Natural killer cell (primary cell): ENCODE measurements at regions of chr3 and their contacts with region 1.

Region 1: GRCh38 chr3:100400780-100401673 is at the starts of genes LNP1 and TOMM70:
- DNase-seq: peak; percentile 89 to 96
- ATAC-seq: peak; percentile 85 to 96 (median 90)
- H3K4me3 ChIP-seq: peak within 1 kb of the TSS; percentile 81
- H3K4me3 Mint-ChIP-seq: peak within 1 kb of the TSS; percentile 93
- H3K27ac ChIP-seq: peak within 1 kb of the TSS; percentile 67
- H3K27ac Mint-ChIP-seq: peak within 1 kb of the TSS; percentile 95
- H3K4me1 ChIP-seq: peaks cover 18% of the 10 kb centered on the region
- H3K4me1 Mint-ChIP-seq: peaks cover 20 to 35% of the 10 kb centered on the region in 2 donors
- H3K27me3 ChIP-seq: no peaks in the 10 kb centered on the region
- H3K27me3 Mint-ChIP-seq: no peaks in the 10 kb centered on the region
- CTCF ChIP-seq: no peak
- total RNA-seq, gene LNP1: 0.39 to 0.85 (median 0.73) TPM
- total RNA-seq, gene TOMM70: 19.1 to 26.6 (median 24.0) TPM

Region 2: DNA sequence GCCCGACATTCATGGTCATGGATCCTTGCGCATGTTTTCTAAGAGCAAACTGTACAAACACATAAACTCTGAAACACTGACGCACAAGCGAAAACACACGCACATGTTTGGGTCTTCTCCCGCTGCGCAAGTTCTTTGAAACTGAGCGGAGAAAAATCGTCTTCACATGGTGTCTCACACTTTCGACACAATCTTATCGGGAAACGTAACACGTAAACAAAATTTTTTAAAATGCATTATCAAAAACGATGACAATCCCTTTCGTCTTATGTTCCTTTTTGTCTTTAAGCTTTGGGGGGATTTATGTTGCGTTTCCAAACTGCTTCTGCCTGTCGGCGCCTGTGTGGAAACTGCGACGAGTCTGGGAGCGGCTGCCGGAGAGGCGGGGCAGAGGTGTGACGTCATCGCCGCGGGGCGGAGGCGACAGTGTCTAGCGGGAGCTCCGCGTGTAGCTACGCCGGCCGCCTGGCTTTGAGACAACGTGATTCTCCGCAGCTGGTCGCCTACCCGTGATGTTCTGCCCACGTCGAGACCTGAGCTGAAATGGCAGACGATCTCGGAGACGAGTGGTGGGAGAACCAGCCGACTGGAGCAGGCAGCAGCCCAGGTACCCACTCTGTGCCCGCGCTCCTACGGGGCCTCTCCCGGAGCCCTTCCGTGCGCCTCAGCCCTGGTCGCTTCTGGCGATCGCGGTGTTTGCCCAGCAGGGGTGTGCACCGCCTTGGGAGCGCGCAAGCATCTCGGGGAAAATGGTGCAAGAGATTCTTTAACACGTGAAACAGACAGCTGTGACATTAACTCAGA is 583.4 kb before region 1 on chr3 and contains the start of gene CMSS1:
- intact Hi-C with region 1: loop called (anchors 10 kb)
- DNase-seq: peak; percentile 96 to 97
- ATAC-seq: peak; percentile 94 to 96 (median 94)
- H3K4me3 ChIP-seq: peak within 1 kb of the TSS; percentile 58
- H3K4me3 Mint-ChIP-seq: peak within 1 kb of the TSS; percentile 98
- H3K27ac ChIP-seq: peak within 1 kb of the TSS; percentile 82
- H3K27ac Mint-ChIP-seq: peak within 1 kb of the TSS; percentile 99
- H3K4me1 ChIP-seq: peaks cover 5% of the 10 kb centered on the region
- H3K4me1 Mint-ChIP-seq: peaks cover 25 to 27% of the 10 kb centered on the region in 2 donors
- H3K27me3 ChIP-seq: no peaks in the 10 kb centered on the region
- H3K27me3 Mint-ChIP-seq: peaks cover 0 to 6% of the 10 kb centered on the region in 2 donors
- CTCF ChIP-seq: no peak
- total RNA-seq, gene CMSS1: 7.8 to 12.7 (median 9.2) TPM

Region 3: GRCh38 chr3:100260685-100261484 is 140.1 kb before region 1 on chr3 and contains the start of gene TBC1D23:
- intact Hi-C with region 1: loop called (anchors 1 kb)
- DNase-seq: peak; percentile 94 to 99
- ATAC-seq: peak; percentile 98 to 100 (median 99)
- H3K4me3 ChIP-seq: peak within 1 kb of the TSS; percentile 80
- H3K4me3 Mint-ChIP-seq: peak within 1 kb of the TSS; percentile 94
- H3K27ac ChIP-seq: peak within 1 kb of the TSS; percentile 93
- H3K27ac Mint-ChIP-seq: peak within 1 kb of the TSS; percentile 95 to 96
- H3K4me1 ChIP-seq: peaks cover 18% of the 10 kb centered on the region
- H3K4me1 Mint-ChIP-seq: peaks cover 39 to 48% of the 10 kb centered on the region in 2 donors
- H3K27me3 ChIP-seq: no peaks in the 10 kb centered on the region
- H3K27me3 Mint-ChIP-seq: no peaks in the 10 kb centered on the region
- CTCF ChIP-seq: no peak
- total RNA-seq, gene TBC1D23: 38.8 to 50.3 (median 45.4) TPM

Region 4: GRCh38 chr3:100316641-100317069 is 84.4 kb before region 1 on chr3:
- intact Hi-C with region 1: loop called (anchors 1 kb)
- DNase-seq: peak in 1 of 2 donors; percentile 77
- ATAC-seq: peak; percentile 79 to 92 (median 92)
- H3K4me3 ChIP-seq: no peak overlapping the region
- H3K4me3 Mint-ChIP-seq: no peak overlapping the region
- H3K27ac ChIP-seq: no peak overlapping the region
- H3K27ac Mint-ChIP-seq: peak overlapping the region; percentile 69 to 79
- H3K4me1 ChIP-seq: peaks cover 4% of the 10 kb centered on the region
- H3K4me1 Mint-ChIP-seq: peaks cover 11 to 13% of the 10 kb centered on the region in 2 donors
- H3K27me3 ChIP-seq: no peaks in the 10 kb centered on the region
- H3K27me3 Mint-ChIP-seq: no peaks in the 10 kb centered on the region
- CTCF ChIP-seq: peak; percentile 77

Region 5: DNA sequence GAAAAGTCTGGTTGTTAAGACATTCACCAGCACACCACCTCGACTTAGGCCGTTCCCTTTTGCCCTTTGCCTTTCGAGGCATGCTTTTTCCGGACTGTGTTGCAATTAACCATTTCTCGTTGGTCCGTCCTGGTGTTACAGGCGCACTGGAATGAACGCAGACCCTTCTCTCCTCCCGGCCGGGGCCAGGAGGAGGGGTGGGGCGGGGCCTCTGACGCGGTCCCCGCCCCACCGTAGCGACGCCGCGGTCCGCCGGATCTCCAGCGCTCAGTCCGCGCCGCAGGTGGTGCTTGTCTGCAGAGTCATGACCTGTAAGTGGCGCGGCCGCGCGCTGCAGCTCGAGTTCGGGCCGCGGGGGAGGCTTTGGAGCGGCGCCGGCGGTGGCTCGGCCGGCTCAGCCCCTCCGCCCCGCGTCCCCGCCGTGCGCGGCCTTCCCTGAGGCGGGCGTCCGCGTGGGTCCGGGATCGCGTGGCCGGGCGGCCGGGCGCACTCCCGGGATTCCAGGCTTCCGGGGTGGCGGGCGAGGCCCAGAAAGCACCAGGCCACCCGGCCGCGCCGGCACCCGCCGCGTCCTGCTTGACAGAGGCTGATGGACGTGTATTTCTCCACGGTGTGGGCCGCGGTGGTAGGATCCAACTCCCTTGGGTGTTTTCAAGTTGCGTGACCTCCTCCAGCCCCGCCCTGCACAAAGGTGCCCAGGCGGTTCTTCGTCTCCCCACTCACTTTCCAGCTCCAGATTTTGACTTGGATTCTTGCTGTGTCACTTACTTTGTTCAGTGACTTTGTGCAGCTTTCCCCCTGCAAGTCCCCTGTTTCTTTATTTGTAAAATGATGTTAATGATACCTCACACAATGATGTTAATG is 66.3 kb before region 1 on chr3 and contains the start of gene NIT2:
- intact Hi-C with region 1: loop called (anchors 1 kb)
- DNase-seq: peak; percentile 69 to 87
- ATAC-seq: peak; percentile 95 to 96 (median 95)
- H3K4me3 ChIP-seq: peak within 1 kb of the TSS; percentile 70
- H3K4me3 Mint-ChIP-seq: peak within 1 kb of the TSS; percentile 95
- H3K27ac ChIP-seq: peak within 1 kb of the TSS; percentile 62
- H3K27ac Mint-ChIP-seq: peak within 1 kb of the TSS; percentile 86 to 88
- H3K4me1 ChIP-seq: peaks cover 21% of the 10 kb centered on the region
- H3K4me1 Mint-ChIP-seq: peaks cover 8 to 29% of the 10 kb centered on the region in 2 donors
- H3K27me3 ChIP-seq: no peaks in the 10 kb centered on the region
- H3K27me3 Mint-ChIP-seq: no peaks in the 10 kb centered on the region
- CTCF ChIP-seq: no peak
- total RNA-seq, gene NIT2: 21.5 to 25.1 (median 24.1) TPM

Region 6: DNA sequence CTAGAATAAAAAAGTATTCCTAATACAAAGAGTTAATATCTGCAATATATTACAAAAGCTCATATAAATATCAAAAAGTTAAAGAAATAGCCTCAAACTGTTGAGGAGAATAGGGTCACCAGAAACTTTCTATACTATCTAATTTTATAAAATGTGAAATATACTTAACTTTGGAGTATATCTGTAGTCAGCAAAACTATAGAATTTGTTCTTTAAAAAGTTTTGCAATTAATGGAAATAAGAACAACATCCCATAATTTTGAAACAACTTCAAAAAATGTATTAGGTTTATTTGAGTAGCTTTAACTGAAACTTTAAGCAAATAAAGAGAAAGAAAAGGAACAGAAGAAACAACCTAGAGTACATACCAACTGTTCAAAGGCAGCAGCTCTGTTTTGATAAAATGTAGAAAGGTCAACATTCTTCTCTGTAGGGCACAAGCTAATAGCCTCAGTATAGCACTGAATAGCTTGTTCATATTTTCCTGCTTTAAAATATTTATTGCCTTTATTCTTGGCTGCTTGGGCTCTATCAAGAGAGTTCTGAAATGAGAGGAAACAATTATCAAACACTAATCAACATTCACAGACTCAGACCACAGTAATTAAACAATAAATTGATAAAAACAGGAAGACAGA is 14.5 kb before region 1 on chr3:
- intact Hi-C with region 1: no loop called
- DNase-seq: no peak
- ATAC-seq: no peak
- H3K4me3 ChIP-seq: no peak overlapping the region
- H3K4me3 Mint-ChIP-seq: no peak overlapping the region
- H3K27ac ChIP-seq: no peak overlapping the region
- H3K27ac Mint-ChIP-seq: no peak overlapping the region
- H3K4me1 ChIP-seq: no peaks in the 10 kb centered on the region
- H3K4me1 Mint-ChIP-seq: peaks cover 8 to 14% of the 10 kb centered on the region in 2 donors
- H3K27me3 ChIP-seq: no peaks in the 10 kb centered on the region
- H3K27me3 Mint-ChIP-seq: no peaks in the 10 kb centered on the region
- CTCF ChIP-seq: no peak

Region 7: GRCh38 chr3:100708967-100709841 is 308.2 kb after region 1 on chr3 and contains the start of gene TFG:
- intact Hi-C with region 1: loop called (anchors 1 kb)
- DNase-seq: peak; percentile 96 to 100
- ATAC-seq: peak; percentile 89 to 97 (median 92)
- H3K4me3 ChIP-seq: peak within 1 kb of the TSS; percentile 44
- H3K4me3 Mint-ChIP-seq: peak within 1 kb of the TSS; percentile 92
- H3K27ac ChIP-seq: peak within 1 kb of the TSS; percentile 84
- H3K27ac Mint-ChIP-seq: peak within 1 kb of the TSS; percentile 97 to 98
- H3K4me1 ChIP-seq: peaks cover 19% of the 10 kb centered on the region
- H3K4me1 Mint-ChIP-seq: peaks cover 37 to 46% of the 10 kb centered on the region in 2 donors
- H3K27me3 ChIP-seq: peaks cover 3% of the 10 kb centered on the region
- H3K27me3 Mint-ChIP-seq: peaks cover 17 to 28% of the 10 kb centered on the region in 2 donors
- CTCF ChIP-seq: no peak
- total RNA-seq, gene TFG: 47.6 to 52.8 (median 50.0) TPM

Region 8: DNA sequence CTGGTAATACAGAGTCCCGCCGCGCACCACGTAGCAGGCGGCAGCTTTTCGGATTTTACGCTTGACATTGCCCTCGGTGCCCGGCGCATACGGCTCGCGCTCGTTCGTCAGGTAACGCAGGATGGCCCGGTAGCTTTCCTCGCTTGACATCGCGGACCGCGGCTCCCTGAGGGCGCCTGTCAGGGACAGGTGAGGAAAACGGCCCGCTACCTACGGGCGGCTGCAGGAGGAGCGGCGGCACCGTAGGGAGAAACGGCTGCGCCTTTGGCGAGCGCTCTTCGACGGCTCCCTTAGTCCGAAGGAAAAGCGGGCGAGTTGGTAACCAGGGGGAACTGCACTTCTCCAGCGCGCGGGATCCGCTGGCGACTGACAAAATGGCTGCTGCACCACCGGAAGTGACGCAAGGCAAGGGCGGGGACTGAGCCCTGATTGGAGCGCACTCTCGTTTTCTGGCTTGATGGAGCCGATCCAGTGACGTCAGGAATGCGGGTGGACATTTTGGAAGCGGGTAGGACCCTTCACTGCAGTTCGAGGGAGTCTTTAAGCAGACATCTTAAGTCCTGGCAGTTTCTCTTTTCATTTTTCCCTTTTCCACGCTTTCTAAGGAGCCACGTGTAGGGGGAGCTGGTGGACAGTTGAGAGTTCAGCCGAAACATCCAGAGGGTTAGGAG is 1275.9 kb after region 1 on chr3 and contains the start of gene ZBTB11:
- intact Hi-C with region 1: loop called (anchors 10 kb)
- DNase-seq: peak; percentile 100
- ATAC-seq: peak; percentile 67 to 81 (median 71)
- H3K4me3 ChIP-seq: peak within 1 kb of the TSS; percentile 92
- H3K4me3 Mint-ChIP-seq: peak within 1 kb of the TSS; percentile 97
- H3K27ac ChIP-seq: peak within 1 kb of the TSS; percentile 98
- H3K27ac Mint-ChIP-seq: peak within 1 kb of the TSS; percentile 96 to 98
- H3K4me1 ChIP-seq: peaks cover 20% of the 10 kb centered on the region
- H3K4me1 Mint-ChIP-seq: peaks cover 45 to 52% of the 10 kb centered on the region in 2 donors
- H3K27me3 ChIP-seq: no peaks in the 10 kb centered on the region
- H3K27me3 Mint-ChIP-seq: no peaks in the 10 kb centered on the region
- CTCF ChIP-seq: no peak
- total RNA-seq, gene ZBTB11: 72.0 to 90.9 (median 83.5) TPM